Body of pancreas (tissue), 4 donors: ENCODE measurements at regions of chr15 and their contacts with region 1.

Region 1: GRCh38 chr15:75229191-75230015 is 27.7 kb downstream of the C15orf39 start:
- DNase-seq: peak in 2 of 4 donors; percentile 1 to 4
- ATAC-seq: no peak
- H3K4me3 ChIP-seq: no peak overlapping the region
- H3K27ac ChIP-seq: no peak overlapping the region
- H3K4me1 ChIP-seq: no peaks in the 10 kb centered on the region
- H3K27me3 ChIP-seq: no peaks in the 10 kb centered on the region
- CTCF ChIP-seq: no peak
- POLR2A ChIP-seq: no peak

Region 2: DNA sequence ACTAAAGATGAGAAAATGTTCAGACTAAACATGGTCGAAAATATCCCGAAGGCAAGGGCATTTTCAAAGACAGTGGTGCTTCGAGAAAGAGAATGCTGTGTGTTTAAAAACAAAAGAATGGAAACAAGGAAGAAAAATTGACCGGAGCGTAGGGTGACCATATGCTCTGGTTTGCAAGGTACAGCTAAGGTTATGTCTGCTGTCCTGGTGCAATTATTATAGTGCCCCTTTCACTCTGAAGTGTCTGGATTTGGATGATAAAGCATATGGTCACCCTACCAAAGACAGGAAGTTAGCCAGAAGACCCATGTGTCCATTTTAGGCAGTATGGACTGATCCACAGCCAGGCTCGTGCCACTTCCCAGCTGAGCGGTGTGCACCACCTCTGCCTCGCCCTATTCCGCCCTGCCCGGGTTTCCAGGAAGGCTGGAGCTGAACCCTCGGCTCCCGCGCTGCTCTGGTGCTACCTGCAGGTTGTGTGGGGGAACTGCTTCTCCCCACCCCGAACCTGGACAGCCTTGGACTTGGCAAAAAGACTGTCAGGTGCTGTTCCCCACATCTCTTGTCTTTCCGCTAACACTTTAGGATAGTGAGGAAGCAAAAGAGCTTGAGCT is 78.5 kb after region 1 on chr15:
- intact Hi-C with region 1: loop called (anchors 10 kb)
- DNase-seq: peak; percentile 64 to 82 (median 72)
- ATAC-seq: peak; percentile 92
- H3K4me3 ChIP-seq: no peak overlapping the region
- H3K27ac ChIP-seq: no peak overlapping the region
- H3K4me1 ChIP-seq: no peaks in the 10 kb centered on the region
- H3K27me3 ChIP-seq: peaks cover 0 to 4% of the 10 kb centered on the region in 2 donors
- CTCF ChIP-seq: peak; percentile 29 to 84 (median 62)
- POLR2A ChIP-seq: no peak

Region 3: DNA sequence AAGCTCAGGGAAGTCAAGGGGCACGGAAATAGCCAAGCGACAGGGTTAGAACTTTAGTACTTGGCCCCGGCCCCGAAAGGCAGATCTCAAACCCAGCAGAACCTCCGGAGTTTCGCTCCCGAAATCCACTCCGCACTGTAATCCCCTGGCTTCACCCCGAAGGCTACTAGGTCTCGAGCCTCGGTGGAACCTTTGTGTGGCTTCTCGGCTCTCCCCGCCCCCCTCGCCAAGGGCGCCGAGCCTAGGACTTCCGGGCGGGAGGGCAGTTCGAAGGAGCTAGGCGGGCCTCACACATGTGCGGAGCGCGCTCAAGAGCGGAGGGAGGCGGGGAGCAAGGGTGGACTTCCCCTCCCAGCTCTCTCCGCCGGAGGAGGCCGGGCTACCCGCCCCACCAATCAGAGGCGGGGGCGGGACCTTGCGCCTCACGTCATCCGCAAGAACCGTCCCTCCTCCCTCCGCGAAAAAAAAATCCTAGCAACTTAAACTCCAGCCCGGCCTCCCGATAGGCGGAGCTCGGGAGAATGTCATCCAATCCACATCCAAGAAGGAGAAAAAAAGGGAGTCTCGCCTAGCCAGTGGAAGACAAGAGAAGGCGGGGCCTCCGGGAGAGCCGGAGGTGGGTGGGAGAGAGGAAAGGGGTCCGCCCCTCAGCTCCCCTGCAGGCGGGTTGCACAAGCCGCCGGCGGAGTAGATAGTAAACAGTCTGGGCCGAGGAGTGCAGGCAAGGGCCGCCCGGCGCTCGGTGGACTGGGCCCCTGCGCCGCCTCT is 224.5 kb after region 1 on chr15:
- intact Hi-C with region 1: no loop called
- DNase-seq: peak; percentile 98 to 99 (median 98)
- ATAC-seq: peak; percentile 54
- H3K4me3 ChIP-seq: peak overlapping the region in 1 of 2 donors; percentile 18
- H3K27ac ChIP-seq: peak overlapping the region; percentile 94 to 98 (median 96)
- H3K4me1 ChIP-seq: peaks cover 22% of the 10 kb centered on the region
- H3K27me3 ChIP-seq: no peaks in the 10 kb centered on the region
- CTCF ChIP-seq: peak in 2 of 7 experiments; percentile 18 to 20
- POLR2A ChIP-seq: peak; percentile 74 to 85 (median 83)